Heart right ventricle (tissue), 16 donors: ENCODE measurements at regions of chr13 and their contacts with region 1.

Region 1: DNA sequence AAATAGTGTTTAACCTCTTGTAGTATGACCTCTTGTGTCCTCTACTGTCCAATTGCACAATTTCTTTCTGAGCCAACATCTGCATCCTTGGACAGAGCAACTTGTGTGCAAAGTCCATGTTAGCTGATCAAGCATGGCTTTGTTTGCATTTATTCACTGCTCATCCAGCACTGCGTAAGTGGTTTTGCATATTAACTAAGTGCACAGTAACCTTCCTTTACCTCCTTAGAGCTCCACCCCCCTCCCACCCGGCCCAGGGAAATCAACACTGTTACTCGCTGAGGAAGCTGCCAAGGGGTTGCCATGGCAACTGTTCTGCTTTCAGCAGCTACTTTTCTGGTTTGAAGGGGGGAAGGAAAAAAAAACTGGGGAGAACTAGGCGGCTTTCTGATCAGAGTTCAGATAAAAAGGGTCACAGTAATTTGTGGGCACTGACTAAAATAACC is 153.5 kb upstream of the KLF12 start:
- DNase-seq: peak; percentile 65 to 85
- ATAC-seq: peak in 7 of 8 donors; percentile 9 to 63 (median 48)
- H3K4me3 ChIP-seq: peak overlapping the region in 8 of 10 donors; percentile 7 to 50 (median 34)
- H3K27ac ChIP-seq: peak overlapping the region in 4 of 10 donors; percentile 25 to 68 (median 52)
- H3K4me1 ChIP-seq: peaks cover 0 to 42% (median 22%) of the 10 kb centered on the region in 9 donors
- H3K27me3 ChIP-seq: no peaks in the 10 kb centered on the region
- CTCF ChIP-seq: no peak

Region 2: DNA sequence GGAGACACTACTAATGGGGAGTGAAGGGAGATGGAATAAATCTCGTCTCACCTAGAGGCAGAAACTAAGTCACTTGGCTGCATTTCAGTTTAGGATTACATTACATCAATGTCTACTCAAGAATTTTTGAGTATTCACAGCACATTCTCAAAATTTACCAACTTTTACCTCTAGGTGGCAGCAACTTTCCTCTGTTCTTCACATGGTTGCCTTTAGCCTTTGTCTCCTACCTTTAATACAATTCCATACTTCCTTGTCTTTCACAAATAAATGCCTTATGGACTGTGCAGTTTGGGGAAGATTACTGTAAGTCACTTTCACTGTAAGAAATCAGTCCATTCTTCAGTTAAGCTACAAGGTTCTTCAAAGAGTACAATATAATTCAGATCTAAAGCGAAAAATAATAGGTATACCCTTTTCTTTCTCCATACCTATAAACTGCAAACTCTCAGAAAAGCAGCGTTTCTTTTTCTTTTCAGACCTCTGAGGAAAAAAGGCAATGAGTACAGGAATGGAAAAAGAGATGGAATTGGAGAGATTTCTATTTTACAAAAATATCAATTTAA is 532.9 kb before region 1 on chr13:
- intact Hi-C with region 1: loop called in 8 of 10 experiments (anchors 2 to 10 kb)
- DNase-seq: peak in 1 of 2 donors; percentile 51
- ATAC-seq: peak in 5 of 8 donors; percentile 52 to 78 (median 62)
- H3K4me3 ChIP-seq: no peak overlapping the region
- H3K27ac ChIP-seq: no peak overlapping the region
- H3K4me1 ChIP-seq: peaks cover 0 to 10% (median 0%) of the 10 kb centered on the region in 9 donors
- H3K27me3 ChIP-seq: no peaks in the 10 kb centered on the region
- CTCF ChIP-seq: peak; percentile 56 to 84 (median 74)

Region 3: DNA sequence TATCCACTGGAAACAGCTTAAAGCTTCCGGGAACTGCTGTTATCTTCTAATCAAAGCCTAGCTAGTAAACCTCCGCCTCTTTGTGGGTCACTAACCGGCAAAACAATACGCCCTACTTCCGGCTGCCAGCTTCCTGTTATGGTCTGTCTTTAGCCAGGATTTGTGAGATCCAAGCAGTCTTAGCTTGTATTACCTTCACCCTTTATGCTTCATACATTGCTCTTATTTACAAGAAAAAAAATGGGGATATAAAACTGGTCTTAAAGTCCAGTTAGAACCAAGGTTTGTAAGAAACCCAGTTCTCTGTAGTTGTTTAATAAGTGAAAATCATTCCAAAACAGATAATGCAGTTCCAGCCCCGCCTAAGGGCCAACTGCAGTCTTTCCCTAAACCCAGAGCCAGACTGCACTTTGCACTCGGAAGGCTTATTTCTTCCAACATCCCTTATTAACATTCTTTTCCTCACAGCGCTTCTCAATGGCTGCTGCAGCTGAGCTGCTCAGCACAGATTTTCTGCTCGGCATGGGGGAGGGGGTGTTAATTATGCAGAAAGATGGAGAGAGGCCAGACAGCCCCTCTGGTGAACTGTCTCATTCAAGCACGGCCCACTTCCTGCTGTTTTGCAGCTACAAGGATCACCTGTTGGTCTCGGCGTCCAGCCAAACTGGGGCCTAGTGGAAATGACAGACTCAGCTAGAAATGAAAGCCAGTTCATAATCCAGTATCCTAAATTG is 521.9 kb before region 1 on chr13:
- intact Hi-C with region 1: loop called in 1 of 10 experiments (anchors 10 kb)
- DNase-seq: peak; percentile 80 to 93
- ATAC-seq: peak; percentile 72 to 93 (median 86)
- H3K4me3 ChIP-seq: peak overlapping the region in 6 of 10 donors; percentile 6 to 27 (median 16)
- H3K27ac ChIP-seq: peak overlapping the region; percentile 1 to 81 (median 66)
- H3K4me1 ChIP-seq: peaks cover 0 to 37% (median 33%) of the 10 kb centered on the region in 9 donors
- H3K27me3 ChIP-seq: no peaks in the 10 kb centered on the region
- CTCF ChIP-seq: peak in 1 of 9 donors; percentile 18

Region 4: DNA sequence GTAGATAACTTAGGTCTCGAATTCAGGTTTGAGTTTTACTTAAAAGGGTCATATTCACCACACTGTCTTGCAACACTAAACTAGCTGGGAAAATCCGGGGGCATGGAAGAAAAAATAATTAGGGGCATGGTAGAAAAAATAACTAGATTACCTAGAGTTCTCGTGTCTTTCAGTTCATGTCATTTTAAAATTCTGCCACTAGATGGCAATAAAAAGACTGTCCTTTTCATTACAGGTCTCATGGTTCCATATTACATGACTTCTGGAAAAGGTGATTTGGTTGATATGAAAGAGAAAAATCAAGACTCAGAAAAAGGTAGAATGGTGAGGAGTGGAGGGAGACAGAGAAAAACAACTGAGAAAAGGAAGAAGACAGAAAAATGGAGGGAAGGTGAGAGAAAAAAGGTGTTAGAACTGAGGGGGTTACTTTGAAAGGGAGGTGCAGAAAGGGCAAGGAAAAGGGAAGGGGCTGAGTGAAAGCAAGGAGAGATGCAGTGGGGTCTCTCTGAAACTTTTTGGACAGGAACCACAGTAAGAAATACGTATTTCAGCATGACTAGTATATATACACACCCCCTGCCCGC is 452.5 kb before region 1 on chr13:
- intact Hi-C with region 1: loop called in 9 of 10 experiments (anchors 2 to 10 kb)
- DNase-seq: no peak
- ATAC-seq: peak in 5 of 8 donors; percentile 35 to 58 (median 50)
- H3K4me3 ChIP-seq: no peak overlapping the region
- H3K27ac ChIP-seq: no peak overlapping the region
- H3K4me1 ChIP-seq: peaks cover 0 to 30% (median 8%) of the 10 kb centered on the region in 9 donors
- H3K27me3 ChIP-seq: no peaks in the 10 kb centered on the region
- CTCF ChIP-seq: peak; percentile 51 to 83 (median 71)

Region 5: DNA sequence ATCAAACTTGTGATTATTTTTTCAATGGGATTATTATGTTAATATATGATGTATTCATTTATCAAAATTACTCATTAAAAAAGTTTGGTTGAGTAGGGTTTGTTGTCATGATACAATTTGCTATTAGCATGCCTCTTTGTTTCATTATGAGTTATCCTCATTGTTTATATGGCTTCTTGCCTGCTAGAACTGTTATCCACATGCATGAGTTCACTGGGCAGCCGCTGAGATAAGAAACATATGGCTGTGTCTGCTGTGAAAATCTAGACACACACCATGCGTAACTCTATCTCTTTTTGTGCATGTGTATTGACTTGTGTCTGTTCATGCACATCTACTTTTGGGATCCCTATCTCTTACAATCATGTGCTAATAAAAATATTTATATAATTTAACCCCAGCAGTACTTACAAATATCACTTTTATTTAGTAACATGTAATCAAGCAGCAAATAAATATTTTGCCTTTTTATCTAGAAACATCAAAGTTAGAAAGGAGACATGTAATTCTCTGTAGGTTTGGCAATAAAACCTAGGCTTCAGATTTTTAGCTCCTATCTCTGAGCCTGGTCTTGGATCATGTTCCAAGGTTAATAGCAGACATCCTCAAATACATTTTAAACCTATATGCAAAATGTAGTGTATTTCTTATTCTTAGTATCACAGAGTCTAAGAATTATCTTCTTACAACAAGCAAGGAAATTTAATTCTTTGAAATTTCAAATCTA is 142.3 kb before region 1 on chr13:
- intact Hi-C with region 1: loop called in 2 of 10 experiments (anchors 5 to 10 kb)
- DNase-seq: no peak
- ATAC-seq: peak in 1 of 8 donors; percentile 51
- H3K4me3 ChIP-seq: no peak overlapping the region
- H3K27ac ChIP-seq: no peak overlapping the region
- H3K4me1 ChIP-seq: peaks cover 0 to 15% (median 6%) of the 10 kb centered on the region in 9 donors
- H3K27me3 ChIP-seq: no peaks in the 10 kb centered on the region
- CTCF ChIP-seq: no peak